Gastrocnemius medialis (tissue), 4 donors: ENCODE measurements at regions of chr5 and their contacts with region 1.

Region 1: DNA sequence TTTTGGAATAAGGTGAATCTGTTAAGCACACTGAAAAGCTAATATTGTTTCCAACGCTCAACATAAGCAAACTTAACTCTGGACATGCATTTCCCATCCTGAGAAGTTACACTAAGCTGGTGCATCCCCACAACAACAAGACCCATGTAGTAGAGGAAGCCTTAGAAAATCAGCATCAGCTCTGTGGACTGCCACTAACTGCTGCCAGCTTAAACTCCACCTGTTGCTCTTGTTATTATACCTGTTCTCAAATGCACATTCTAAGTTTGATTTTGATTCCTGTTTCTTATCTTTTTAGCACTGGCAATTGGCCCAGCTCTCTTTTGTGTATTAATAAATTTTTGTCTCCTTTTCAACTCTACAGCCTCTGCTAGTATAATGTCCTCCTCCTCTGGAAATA is 924.8 kb downstream of the DNAH5 start:
- DNase-seq: no peak
- ATAC-seq: no peak
- H3K4me3 ChIP-seq: no peak overlapping the region
- H3K27ac ChIP-seq: no peak overlapping the region
- H3K4me1 ChIP-seq: no peaks in the 10 kb centered on the region
- H3K27me3 ChIP-seq: no peaks in the 10 kb centered on the region
- CTCF ChIP-seq: no peak
- POLR2A ChIP-seq: no peak

Region 2: GRCh38 chr5:12999667-13000066 is 20.1 kb before region 1 on chr5:
- in situ Hi-C with region 1: no loop called
- intact Hi-C with region 1: loop called (anchors 2 kb)
- DNase-seq: no peak
- ATAC-seq: no peak
- H3K4me3 ChIP-seq: no peak overlapping the region
- H3K27ac ChIP-seq: no peak overlapping the region
- H3K4me1 ChIP-seq: no peaks in the 10 kb centered on the region
- H3K27me3 ChIP-seq: no peaks in the 10 kb centered on the region
- CTCF ChIP-seq: no peak
- POLR2A ChIP-seq: no peak

Region 3: GRCh38 chr5:13108265-13108664 is 88.5 kb after region 1 on chr5:
- in situ Hi-C with region 1: no loop called
- intact Hi-C with region 1: no loop called
- DNase-seq: no peak
- ATAC-seq: no peak
- H3K4me3 ChIP-seq: no peak overlapping the region
- H3K27ac ChIP-seq: no peak overlapping the region
- H3K4me1 ChIP-seq: no peaks in the 10 kb centered on the region
- H3K27me3 ChIP-seq: no peaks in the 10 kb centered on the region
- CTCF ChIP-seq: no peak
- POLR2A ChIP-seq: no peak

Region 4: DNA sequence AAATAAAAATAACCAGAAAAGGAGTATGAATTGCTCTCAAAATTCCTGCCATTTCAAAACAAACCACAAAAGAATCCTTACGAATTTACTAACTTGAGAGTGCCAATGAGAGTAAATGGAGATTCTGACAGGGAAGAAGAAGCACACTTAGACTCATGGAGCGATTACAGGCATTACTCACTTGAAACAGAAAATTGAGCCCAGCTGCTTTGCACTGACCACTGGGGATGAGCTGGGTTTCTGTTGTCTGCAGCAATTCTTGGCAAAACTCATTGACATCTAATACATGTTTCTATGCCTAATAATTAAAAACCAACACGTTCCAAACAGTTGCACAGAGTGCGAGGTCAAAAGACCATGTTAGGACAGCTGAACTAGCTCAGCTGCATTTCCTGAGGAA is 193.2 kb after region 1 on chr5:
- in situ Hi-C with region 1: no loop called
- intact Hi-C with region 1: no loop called
- DNase-seq: no peak
- ATAC-seq: no peak
- H3K4me3 ChIP-seq: no peak overlapping the region
- H3K27ac ChIP-seq: no peak overlapping the region
- H3K4me1 ChIP-seq: no peaks in the 10 kb centered on the region
- H3K27me3 ChIP-seq: no peaks in the 10 kb centered on the region
- CTCF ChIP-seq: no peak
- POLR2A ChIP-seq: no peak